ENCODE measurements at regions of chr14 and their contacts with region 1.

Region 1: GRCh38 chr14:31207755-31208545 is at the start of gene HECTD1:
- DNase-seq: peak; percentile 86 to 95
- ATAC-seq: peak; percentile 74 to 85 (median 76)
- H3K4me3 ChIP-seq: peak within 1 kb of the TSS; percentile 90
- H3K4me3 Mint-ChIP-seq: peak within 1 kb of the TSS; percentile 94
- H3K27ac ChIP-seq: peak within 1 kb of the TSS; percentile 100
- H3K27ac Mint-ChIP-seq: peak within 1 kb of the TSS; percentile 99
- H3K4me1 ChIP-seq: peaks cover 26% of the 10 kb centered on the region
- H3K4me1 Mint-ChIP-seq: peaks cover 41 to 53% of the 10 kb centered on the region in 2 donors
- H3K27me3 ChIP-seq: no peaks in the 10 kb centered on the region
- H3K27me3 Mint-ChIP-seq: no peaks in the 10 kb centered on the region
- CTCF ChIP-seq: peak; percentile 81
- total RNA-seq, gene HECTD1: 162 to 202 (median 179) TPM

Region 2: DNA sequence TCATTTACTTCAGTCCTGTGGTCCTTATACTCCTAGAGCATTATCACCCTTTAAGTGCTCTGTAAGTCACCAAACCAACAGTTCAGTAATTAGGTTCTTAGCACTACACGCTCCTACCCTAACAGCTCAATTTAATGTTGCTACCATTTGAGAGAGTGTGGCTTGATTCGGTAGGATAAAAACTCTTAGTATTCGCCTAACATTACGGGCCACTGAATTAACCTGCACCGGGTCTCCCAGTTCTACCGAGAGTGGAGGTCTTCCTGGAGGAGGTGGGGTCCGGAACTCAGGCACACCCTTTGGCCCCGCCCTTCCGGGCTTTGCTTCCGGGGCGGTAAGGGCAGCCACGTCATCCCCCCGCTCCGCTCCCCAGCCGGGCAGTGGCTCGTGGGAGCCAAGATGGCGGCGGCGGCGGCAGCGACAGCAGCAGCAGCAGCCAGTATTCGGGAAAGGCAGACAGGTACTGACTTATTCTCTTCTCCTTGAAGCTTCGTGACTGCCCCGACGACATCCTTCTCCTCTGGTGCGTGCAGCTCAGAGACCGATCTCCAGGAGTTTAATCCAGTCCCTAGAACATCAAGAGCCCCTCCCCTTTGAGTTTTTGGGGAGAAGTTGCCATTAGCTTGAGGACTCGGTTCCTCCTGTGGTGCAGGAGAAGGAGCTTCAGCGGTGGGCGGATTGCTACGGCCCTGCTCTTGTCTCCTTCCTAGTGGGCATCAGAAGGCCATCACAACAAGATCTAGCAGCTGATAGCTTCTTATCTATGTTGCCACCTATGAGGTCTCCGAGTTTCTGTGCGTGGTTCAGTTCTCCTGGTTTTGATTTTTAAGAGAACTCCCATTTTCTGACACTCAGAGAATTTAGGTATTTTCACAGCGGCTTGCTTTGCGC is 585.8 kb before region 1 on chr14 and contains the start of gene SCFD1:
- intact Hi-C with region 1: loop called (anchors 5 kb)
- DNase-seq: peak; percentile 88 to 96
- ATAC-seq: peak; percentile 98 to 100 (median 98)
- H3K4me3 ChIP-seq: peak within 1 kb of the TSS; percentile 74
- H3K4me3 Mint-ChIP-seq: peak within 1 kb of the TSS; percentile 92
- H3K27ac ChIP-seq: peak within 1 kb of the TSS; percentile 84
- H3K27ac Mint-ChIP-seq: peak within 1 kb of the TSS; percentile 94 to 98
- H3K4me1 ChIP-seq: peaks cover 13% of the 10 kb centered on the region
- H3K4me1 Mint-ChIP-seq: peaks cover 33 to 39% of the 10 kb centered on the region in 2 donors
- H3K27me3 ChIP-seq: no peaks in the 10 kb centered on the region
- H3K27me3 Mint-ChIP-seq: no peaks in the 10 kb centered on the region
- CTCF ChIP-seq: no peak
- total RNA-seq, gene SCFD1: 97.0 to 106 (median 105) TPM

Region 3: GRCh38 chr14:31026395-31027118 is 181.4 kb before region 1 on chr14:
- intact Hi-C with region 1: loop called (anchors 5 kb)
- DNase-seq: peak; percentile 89 to 95
- ATAC-seq: peak; percentile 92 to 99 (median 95)
- H3K4me3 ChIP-seq: peak overlapping the region; percentile 60
- H3K4me3 Mint-ChIP-seq: peak overlapping the region; percentile 95
- H3K27ac ChIP-seq: peak overlapping the region; percentile 92
- H3K27ac Mint-ChIP-seq: peak overlapping the region; percentile 95 to 96
- H3K4me1 ChIP-seq: peaks cover 6% of the 10 kb centered on the region
- H3K4me1 Mint-ChIP-seq: peaks cover 31 to 36% of the 10 kb centered on the region in 2 donors
- H3K27me3 ChIP-seq: no peaks in the 10 kb centered on the region
- H3K27me3 Mint-ChIP-seq: no peaks in the 10 kb centered on the region
- CTCF ChIP-seq: no peak

Region 4: DNA sequence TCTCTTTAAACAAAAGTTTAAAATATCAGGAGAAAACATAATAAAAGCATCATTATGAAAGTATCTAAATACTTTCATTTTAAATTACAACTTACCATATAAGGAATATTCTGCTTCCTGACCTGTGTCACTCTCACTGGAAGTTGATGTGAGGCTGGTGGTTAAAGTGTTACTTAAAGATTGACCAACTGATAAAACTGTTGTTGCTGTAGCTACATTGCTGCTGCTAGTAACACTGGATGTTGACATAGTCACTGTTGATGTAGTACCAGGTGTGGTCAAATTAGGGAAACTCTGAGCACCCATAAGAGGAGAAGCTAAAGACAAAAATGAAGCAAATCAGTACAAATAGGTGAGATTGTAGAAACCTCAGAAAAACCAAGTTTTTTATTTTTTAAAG is 80.3 kb before region 1 on chr14:
- intact Hi-C with region 1: loop called (anchors 1 kb)
- DNase-seq: peak in 1 of 2 donors; percentile 88
- ATAC-seq: peak; percentile 90 to 96 (median 93)
- H3K4me3 ChIP-seq: no peak overlapping the region
- H3K4me3 Mint-ChIP-seq: peak overlapping the region; percentile 66
- H3K27ac ChIP-seq: peak overlapping the region; percentile 74
- H3K27ac Mint-ChIP-seq: peak overlapping the region; percentile 79 to 86
- H3K4me1 ChIP-seq: peaks cover 31% of the 10 kb centered on the region
- H3K4me1 Mint-ChIP-seq: peaks cover 29 to 31% of the 10 kb centered on the region in 2 donors
- H3K27me3 ChIP-seq: no peaks in the 10 kb centered on the region
- H3K27me3 Mint-ChIP-seq: peaks cover 0 to 2% of the 10 kb centered on the region in 2 donors
- CTCF ChIP-seq: no peak

Region 5: GRCh38 chr14:31189346-31190219 is 18.4 kb before region 1 on chr14:
- intact Hi-C with region 1: no loop called
- DNase-seq: no peak
- ATAC-seq: no peak
- H3K4me3 ChIP-seq: no peak overlapping the region
- H3K4me3 Mint-ChIP-seq: no peak overlapping the region
- H3K27ac ChIP-seq: no peak overlapping the region
- H3K27ac Mint-ChIP-seq: peak overlapping the region; percentile 8 to 21
- H3K4me1 ChIP-seq: no peaks in the 10 kb centered on the region
- H3K4me1 Mint-ChIP-seq: peaks cover 24 to 43% of the 10 kb centered on the region in 2 donors
- H3K27me3 ChIP-seq: no peaks in the 10 kb centered on the region
- H3K27me3 Mint-ChIP-seq: no peaks in the 10 kb centered on the region
- CTCF ChIP-seq: no peak

Measured in natural killer cell (primary cell).